Breast epithelium (tissue), 4 donors: ENCODE measurements at regions of chr16 and their contacts with region 1.

Region 1: DNA sequence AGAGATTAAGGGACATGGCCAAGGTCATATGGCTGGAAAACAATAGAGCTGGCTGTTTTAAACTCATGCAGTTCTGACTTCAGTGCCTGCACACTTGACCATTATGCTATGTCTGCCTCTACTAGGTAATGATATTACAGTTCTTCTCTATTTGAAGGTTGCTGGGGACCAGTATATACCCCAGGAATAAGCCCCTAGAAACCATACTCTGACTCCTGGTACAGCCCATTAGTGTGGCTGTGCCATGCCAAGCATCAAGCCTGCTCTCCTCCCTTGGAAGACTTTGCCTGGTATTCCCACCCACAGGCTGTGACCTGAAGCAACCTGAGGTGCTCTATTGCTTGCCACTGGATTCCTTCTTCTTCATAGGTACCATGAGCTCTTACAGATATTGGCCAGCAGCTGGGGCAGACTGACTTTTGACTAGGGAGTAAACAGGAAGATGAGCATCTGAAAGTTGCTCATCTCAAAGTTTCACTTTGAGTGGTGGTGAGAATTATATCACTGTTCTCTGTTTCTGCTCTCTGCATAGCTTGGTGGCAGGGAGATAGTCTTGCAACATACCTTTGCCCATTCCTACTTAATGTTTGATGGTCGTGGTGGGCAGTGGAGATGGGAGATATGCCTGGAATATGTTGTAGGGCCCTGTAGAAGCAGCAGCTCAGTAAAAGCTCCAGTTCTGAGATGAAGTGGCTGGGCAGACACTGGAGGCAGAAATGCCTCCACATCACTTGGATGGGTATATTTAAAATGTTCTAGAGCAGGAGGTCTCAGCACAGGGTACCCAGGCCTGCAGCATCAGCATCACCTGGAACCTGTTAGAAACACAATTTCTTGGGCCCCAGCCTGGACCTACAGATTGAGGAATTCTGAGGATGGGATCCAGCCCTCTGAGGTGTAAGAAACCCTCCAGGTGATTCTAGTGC is 274.7 kb downstream of the HS3ST4 start:
- DNase-seq: no peak
- H3K4me3 ChIP-seq: no peak overlapping the region
- H3K27ac ChIP-seq: no peak overlapping the region
- H3K4me1 ChIP-seq: no peaks in the 10 kb centered on the region
- H3K27me3 ChIP-seq: no peaks in the 10 kb centered on the region
- CTCF ChIP-seq: no peak
- POLR2A ChIP-seq: no peak

Region 2: GRCh38 chr16:27698266-27698665 is 1731.8 kb after region 1 on chr16:
- intact Hi-C with region 1: loop called (anchors 5 kb)
- DNase-seq: peak in 1 of 2 donors; percentile 25
- H3K4me3 ChIP-seq: no peak overlapping the region
- H3K27ac ChIP-seq: no peak overlapping the region
- H3K4me1 ChIP-seq: no peaks in the 10 kb centered on the region
- H3K27me3 ChIP-seq: no peaks in the 10 kb centered on the region
- CTCF ChIP-seq: no peak
- POLR2A ChIP-seq: no peak